Activated CD4-positive, alpha-beta memory T cell treated with anti-CD3 and anti-CD28 coated beads for 36 hours (primary cell): ENCODE measurements at regions of chr4 and their contacts with region 1.

Region 1: GRCh38 chr4:83535520-83536361 is at the start of gene GPAT3:
- DNase-seq: peak; percentile 84
- H3K4me3 Mint-ChIP-seq: peak within 1 kb of the TSS; percentile 83
- H3K27ac Mint-ChIP-seq: peak within 1 kb of the TSS; percentile 44
- H3K4me1 Mint-ChIP-seq: peaks cover 16% of the 10 kb centered on the region
- H3K27me3 Mint-ChIP-seq: peaks cover 12% of the 10 kb centered on the region
- total RNA-seq, gene GPAT3: 4.2 to 7.2 TPM

Region 2: GRCh38 chr4:82984459-82984858 is 551.3 kb before region 1 on chr4:
- CTCF ChIA-PET with region 1: no interaction called
- POLR2A ChIA-PET with region 1: no interaction called
- intact Hi-C with region 1: no loop called
- DNase-seq: no peak
- H3K4me3 Mint-ChIP-seq: no peak overlapping the region
- H3K27ac Mint-ChIP-seq: no peak overlapping the region
- H3K4me1 Mint-ChIP-seq: peaks cover 8% of the 10 kb centered on the region
- H3K27me3 Mint-ChIP-seq: no peaks in the 10 kb centered on the region

Region 3: GRCh38 chr4:83484500-83485461 is 51.0 kb before region 1 on chr4 and contains the start of gene ABRAXAS1:
- CTCF ChIA-PET with region 1: no interaction called
- POLR2A ChIA-PET with region 1: no interaction called
- intact Hi-C with region 1: loop called (anchors 1 kb)
- DNase-seq: peak; percentile 95
- H3K4me3 Mint-ChIP-seq: peak within 1 kb of the TSS; percentile 91
- H3K27ac Mint-ChIP-seq: peak within 1 kb of the TSS; percentile 94
- H3K4me1 Mint-ChIP-seq: peaks cover 14% of the 10 kb centered on the region
- H3K27me3 Mint-ChIP-seq: no peaks in the 10 kb centered on the region
- total RNA-seq, gene ABRAXAS1: 17.5 to 18.0 TPM

Region 4: GRCh38 chr4:83516042-83516772 is 19.5 kb before region 1 on chr4:
- CTCF ChIA-PET with region 1: no interaction called
- POLR2A ChIA-PET with region 1: no interaction called
- intact Hi-C with region 1: no loop called
- DNase-seq: no peak
- H3K4me3 Mint-ChIP-seq: no peak overlapping the region
- H3K27ac Mint-ChIP-seq: no peak overlapping the region
- H3K4me1 Mint-ChIP-seq: no peaks in the 10 kb centered on the region
- H3K27me3 Mint-ChIP-seq: no peaks in the 10 kb centered on the region

Region 5: GRCh38 chr4:83850435-83850834 is 314.7 kb after region 1 on chr4:
- CTCF ChIA-PET with region 1: no interaction called
- POLR2A ChIA-PET with region 1: no interaction called
- intact Hi-C with region 1: no loop called
- DNase-seq: no peak
- H3K4me3 Mint-ChIP-seq: no peak overlapping the region
- H3K27ac Mint-ChIP-seq: no peak overlapping the region
- H3K4me1 Mint-ChIP-seq: no peaks in the 10 kb centered on the region
- H3K27me3 Mint-ChIP-seq: no peaks in the 10 kb centered on the region